KBM-7 (cell line): ENCODE measurements at regions of chr14 and their contacts with region 1.

Region 1: DNA sequence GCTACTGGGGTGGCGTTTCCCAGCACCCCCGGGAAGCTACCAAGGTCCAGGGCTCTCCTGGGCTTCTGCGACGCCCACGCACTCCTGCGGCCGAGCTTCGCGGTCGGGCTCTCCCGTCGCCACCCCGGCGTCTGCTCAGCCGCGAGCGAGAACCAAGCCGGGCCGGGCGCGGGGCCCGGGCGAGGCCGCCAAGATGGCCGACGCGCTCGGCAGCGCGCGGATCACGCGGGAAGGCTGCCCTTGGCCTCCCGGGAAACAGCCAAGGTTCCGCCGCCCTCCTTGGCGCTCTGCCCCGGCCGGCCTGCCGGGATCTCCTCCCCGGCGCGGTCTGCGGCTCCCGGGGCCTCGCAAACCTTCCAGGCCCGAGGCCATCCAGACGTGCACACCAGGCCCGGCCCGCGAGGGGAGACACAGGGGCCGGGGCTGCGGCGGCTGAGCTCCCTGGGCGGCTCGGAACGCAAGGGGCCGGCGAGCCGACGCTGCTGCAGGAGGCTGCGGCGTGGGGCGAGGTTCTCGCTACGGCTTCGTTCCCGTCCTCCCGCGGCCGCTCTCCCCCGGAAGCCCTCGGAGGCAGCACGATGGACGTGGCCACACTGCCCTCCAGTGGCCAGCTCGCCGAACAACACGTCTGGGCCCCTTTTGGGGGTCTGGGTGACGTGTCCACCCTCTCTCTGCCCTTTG is 23.5 kb upstream of the ZFP36L1 start:
- DNase-seq: peak; percentile 91

Region 2: DNA sequence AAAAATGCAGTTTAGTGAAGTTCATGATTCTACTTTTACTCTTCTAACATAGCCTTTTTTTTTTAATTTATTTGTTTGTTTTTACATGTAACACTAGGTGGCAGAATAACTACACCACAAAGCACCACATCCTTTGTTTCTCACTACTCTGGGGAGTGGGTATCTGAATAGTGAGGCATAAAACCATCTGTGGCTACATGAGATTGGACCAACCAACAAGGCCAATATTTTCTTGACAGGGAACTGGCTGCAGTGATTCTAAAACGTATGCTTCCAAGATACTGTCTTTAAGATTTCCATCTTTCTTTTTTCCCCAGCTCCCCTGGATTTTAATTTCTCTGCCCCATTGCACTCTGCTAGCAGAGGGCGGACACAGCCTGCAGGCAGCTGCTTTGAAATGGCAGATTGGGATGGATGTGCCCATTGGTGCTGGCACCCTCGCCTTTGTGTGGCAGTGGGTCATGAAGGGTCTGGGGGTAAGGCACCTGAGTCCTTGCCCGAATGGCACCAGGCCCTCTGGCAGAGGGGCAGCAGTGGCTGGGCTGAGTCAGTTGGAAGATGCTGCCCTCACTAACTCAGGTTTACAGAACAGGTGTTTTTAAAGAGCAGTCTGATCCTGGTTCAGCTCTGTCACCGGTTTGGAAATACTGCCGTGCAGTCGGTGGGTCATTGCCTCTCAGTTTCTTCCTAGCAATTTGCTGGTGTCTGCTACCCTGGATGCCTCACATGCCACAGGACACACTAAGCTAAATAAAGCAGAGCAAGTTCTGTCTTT is 567.7 kb before region 1 on chr14:
- in situ Hi-C with region 1: loop called (anchors 25 kb)
- DNase-seq: peak; percentile 54

Region 3: DNA sequence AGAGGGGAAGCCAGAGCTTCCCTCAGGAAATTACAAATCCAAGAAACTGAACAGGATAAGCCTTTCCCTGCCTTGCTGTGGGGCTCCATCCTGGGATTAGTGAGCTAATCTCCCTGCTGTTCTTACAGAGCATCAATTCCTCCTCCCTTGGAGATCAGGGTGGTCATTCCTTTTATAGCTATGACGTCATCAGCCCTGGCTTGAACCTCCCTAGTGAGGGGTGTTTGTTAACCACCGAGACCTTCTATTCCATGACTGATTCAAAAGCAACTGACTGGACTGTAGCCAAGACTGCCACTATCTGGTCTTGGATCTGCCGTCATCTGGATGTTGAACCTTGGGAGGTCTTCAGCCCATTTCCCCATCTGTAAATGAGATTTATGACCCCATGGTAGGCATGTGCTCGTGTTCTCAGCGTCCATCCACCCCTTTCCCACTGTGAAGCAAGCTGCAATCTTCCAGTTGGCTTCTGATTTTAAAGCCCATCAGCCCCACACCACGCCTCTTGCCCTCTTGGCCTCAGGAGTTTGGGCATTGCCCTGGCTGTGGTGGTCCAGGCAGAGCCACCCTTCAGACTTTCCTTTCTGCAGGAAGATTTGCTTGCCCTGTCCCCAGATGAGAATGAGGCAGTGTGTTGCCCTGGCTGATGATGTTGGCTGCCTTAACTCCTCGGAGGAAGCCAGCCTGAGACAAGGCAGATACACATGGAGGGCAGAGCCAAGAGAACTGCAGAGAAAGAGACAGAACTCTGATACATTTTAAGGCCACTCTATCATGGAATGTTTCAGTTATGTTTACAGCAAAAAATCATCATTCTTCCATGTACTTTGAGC is 222.3 kb after region 1 on chr14:
- in situ Hi-C with region 1: no loop called
- DNase-seq: no peak